CD4-positive, alpha-beta T cell (primary cell): ENCODE measurements at regions of chrX and their contacts with region 1.

Region 1: GRCh38 chrX:71181910-71182799 is 37.5 kb downstream of the NLGN3 start:
- DNase-seq: peak; percentile 55 to 94 (median 72)
- ATAC-seq: peak; percentile 94
- H3K4me3 ChIP-seq: peak overlapping the region; percentile 68
- H3K4me3 Mint-ChIP-seq: peak overlapping the region; percentile 98
- H3K27ac ChIP-seq: peak overlapping the region; percentile 89 to 92
- H3K27ac Mint-ChIP-seq: peak overlapping the region; percentile 98
- H3K4me1 ChIP-seq: peaks cover 20% of the 10 kb centered on the region
- H3K4me1 Mint-ChIP-seq: peaks cover 25% of the 10 kb centered on the region
- H3K27me3 ChIP-seq: no peaks in the 10 kb centered on the region
- H3K27me3 Mint-ChIP-seq: no peaks in the 10 kb centered on the region
- CTCF ChIP-seq: no peak

Region 2: GRCh38 chrX:70454441-70455365 is 727.5 kb before region 1 on chrX:
- CTCF ChIA-PET with region 1: no interaction called
- POLR2A ChIA-PET with region 1: no interaction called
- intact Hi-C with region 1: loop called in 1 of 2 experiments (anchors 5 kb)
- DNase-seq: peak in 13 of 14 experiments; percentile 38 to 89 (median 62)
- ATAC-seq: peak; percentile 74
- H3K4me3 ChIP-seq: peak overlapping the region; percentile 67
- H3K4me3 Mint-ChIP-seq: peak overlapping the region; percentile 87
- H3K27ac ChIP-seq: peak overlapping the region; percentile 17 to 61
- H3K27ac Mint-ChIP-seq: peak overlapping the region; percentile 86
- H3K4me1 ChIP-seq: peaks cover 40% of the 10 kb centered on the region
- H3K4me1 Mint-ChIP-seq: peaks cover 41% of the 10 kb centered on the region
- H3K27me3 ChIP-seq: no peaks in the 10 kb centered on the region
- H3K27me3 Mint-ChIP-seq: no peaks in the 10 kb centered on the region
- CTCF ChIP-seq: peak; percentile 69

Region 3: DNA sequence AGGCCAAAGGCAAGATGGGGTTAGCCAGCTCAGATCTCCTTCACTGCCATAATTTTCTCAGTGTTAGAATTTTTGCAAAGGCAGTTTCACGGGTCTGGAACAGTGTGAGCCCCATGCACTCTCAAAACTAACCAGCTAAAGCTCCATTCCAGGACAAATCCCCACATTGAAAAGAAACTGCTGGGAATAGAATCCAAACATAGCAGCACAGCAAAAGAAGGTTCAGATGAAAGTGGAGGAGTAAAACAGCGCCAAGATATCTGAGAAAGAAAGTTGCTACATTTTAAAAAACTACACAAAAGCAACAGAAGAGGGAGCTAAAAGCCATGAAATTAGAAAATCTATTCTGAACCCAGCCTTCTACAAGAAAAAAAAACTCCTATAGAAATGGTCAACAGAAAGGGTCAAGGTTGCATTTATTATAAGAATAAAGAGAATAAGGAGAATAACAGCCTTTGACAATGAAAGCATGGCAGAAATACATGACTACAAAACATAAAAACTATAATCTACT is 211.6 kb before region 1 on chrX:
- CTCF ChIA-PET with region 1: no interaction called
- POLR2A ChIA-PET with region 1: no interaction called
- intact Hi-C with region 1: loop called (anchors 1 to 5 kb)
- DNase-seq: peak in 3 of 14 experiments; percentile 16 to 26 (median 24)
- ATAC-seq: no peak
- H3K4me3 ChIP-seq: no peak overlapping the region
- H3K4me3 Mint-ChIP-seq: no peak overlapping the region
- H3K27ac ChIP-seq: no peak overlapping the region
- H3K27ac Mint-ChIP-seq: no peak overlapping the region
- H3K4me1 ChIP-seq: peaks cover 4% of the 10 kb centered on the region
- H3K4me1 Mint-ChIP-seq: peaks cover 9% of the 10 kb centered on the region
- H3K27me3 ChIP-seq: no peaks in the 10 kb centered on the region
- H3K27me3 Mint-ChIP-seq: no peaks in the 10 kb centered on the region
- CTCF ChIP-seq: peak; percentile 38

Region 4: DNA sequence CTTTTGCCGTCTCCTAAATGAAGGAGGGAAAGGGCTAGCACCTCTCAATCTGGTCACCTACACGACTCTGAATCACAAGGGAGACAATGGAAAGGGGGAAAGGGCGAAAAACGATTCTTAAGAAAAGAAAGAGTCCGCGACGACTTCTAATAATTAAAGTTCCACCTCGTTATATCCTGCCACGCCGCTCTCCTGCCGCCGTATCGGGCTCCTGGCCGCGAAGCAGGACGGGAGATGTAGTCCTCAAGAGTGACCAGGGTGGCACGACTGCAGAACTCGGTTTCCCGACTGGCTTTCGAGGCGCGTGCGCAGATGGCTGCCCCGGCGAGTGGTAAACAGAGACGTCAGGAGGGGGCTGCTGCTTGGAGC is 86.6 kb before region 1 on chrX and contains the start of gene FOXO4:
- CTCF ChIA-PET with region 1: no interaction called
- POLR2A ChIA-PET with region 1: interaction called, 6 read pairs
- intact Hi-C with region 1: loop called (anchors 2 kb)
- DNase-seq: peak; percentile 75 to 94 (median 86)
- ATAC-seq: peak; percentile 85
- H3K4me3 ChIP-seq: peak within 1 kb of the TSS; percentile 83
- H3K4me3 Mint-ChIP-seq: peak within 1 kb of the TSS; percentile 96
- H3K27ac ChIP-seq: peak within 1 kb of the TSS; percentile 41 to 62
- H3K27ac Mint-ChIP-seq: peak within 1 kb of the TSS; percentile 98
- H3K4me1 ChIP-seq: peaks cover 37% of the 10 kb centered on the region
- H3K4me1 Mint-ChIP-seq: peaks cover 49% of the 10 kb centered on the region
- H3K27me3 ChIP-seq: no peaks in the 10 kb centered on the region
- H3K27me3 Mint-ChIP-seq: no peaks in the 10 kb centered on the region
- CTCF ChIP-seq: no peak
- total RNA-seq, gene FOXO4: 20.9 to 23.8 TPM

Region 5: GRCh38 chrX:71118032-71118984 is 63.8 kb before region 1 on chrX and contains the start of gene MED12:
- CTCF ChIA-PET with region 1: no interaction called
- POLR2A ChIA-PET with region 1: interaction called, 18 read pairs
- intact Hi-C with region 1: no loop called
- DNase-seq: peak; percentile 63 to 89 (median 76)
- ATAC-seq: peak; percentile 95
- H3K4me3 ChIP-seq: peak within 1 kb of the TSS; percentile 83
- H3K4me3 Mint-ChIP-seq: peak within 1 kb of the TSS; percentile 93
- H3K27ac ChIP-seq: peak within 1 kb of the TSS; percentile 77 to 86
- H3K27ac Mint-ChIP-seq: peak within 1 kb of the TSS; percentile 94
- H3K4me1 ChIP-seq: peaks cover 40% of the 10 kb centered on the region
- H3K4me1 Mint-ChIP-seq: peaks cover 36% of the 10 kb centered on the region
- H3K27me3 ChIP-seq: no peaks in the 10 kb centered on the region
- H3K27me3 Mint-ChIP-seq: no peaks in the 10 kb centered on the region
- CTCF ChIP-seq: no peak
- total RNA-seq, gene MED12: 44.5 to 55.3 TPM

Region 6: GRCh38 chrX:71151920-71152319 is 30.2 kb before region 1 on chrX:
- CTCF ChIA-PET with region 1: no interaction called
- POLR2A ChIA-PET with region 1: no interaction called
- intact Hi-C with region 1: no loop called
- DNase-seq: no peak
- ATAC-seq: no peak
- H3K4me3 ChIP-seq: no peak overlapping the region
- H3K4me3 Mint-ChIP-seq: no peak overlapping the region
- H3K27ac ChIP-seq: no peak overlapping the region
- H3K27ac Mint-ChIP-seq: no peak overlapping the region
- H3K4me1 ChIP-seq: no peaks in the 10 kb centered on the region
- H3K4me1 Mint-ChIP-seq: no peaks in the 10 kb centered on the region
- H3K27me3 ChIP-seq: no peaks in the 10 kb centered on the region
- H3K27me3 Mint-ChIP-seq: no peaks in the 10 kb centered on the region
- CTCF ChIP-seq: no peak

Region 7: GRCh38 chrX:71198066-71198465 is 15.9 kb after region 1 on chrX:
- CTCF ChIA-PET with region 1: no interaction called
- POLR2A ChIA-PET with region 1: interaction called, 29 read pairs
- intact Hi-C with region 1: no loop called
- DNase-seq: peak in 4 of 14 experiments; percentile 18 to 59 (median 44)
- ATAC-seq: peak; percentile 49
- H3K4me3 ChIP-seq: peak overlapping the region; percentile 66
- H3K4me3 Mint-ChIP-seq: peak overlapping the region; percentile 84
- H3K27ac ChIP-seq: peak overlapping the region in 1 of 2 donors; percentile 34
- H3K27ac Mint-ChIP-seq: peak overlapping the region; percentile 77
- H3K4me1 ChIP-seq: peaks cover 12% of the 10 kb centered on the region
- H3K4me1 Mint-ChIP-seq: peaks cover 31% of the 10 kb centered on the region
- H3K27me3 ChIP-seq: no peaks in the 10 kb centered on the region
- H3K27me3 Mint-ChIP-seq: no peaks in the 10 kb centered on the region
- CTCF ChIP-seq: no peak

Region 8: DNA sequence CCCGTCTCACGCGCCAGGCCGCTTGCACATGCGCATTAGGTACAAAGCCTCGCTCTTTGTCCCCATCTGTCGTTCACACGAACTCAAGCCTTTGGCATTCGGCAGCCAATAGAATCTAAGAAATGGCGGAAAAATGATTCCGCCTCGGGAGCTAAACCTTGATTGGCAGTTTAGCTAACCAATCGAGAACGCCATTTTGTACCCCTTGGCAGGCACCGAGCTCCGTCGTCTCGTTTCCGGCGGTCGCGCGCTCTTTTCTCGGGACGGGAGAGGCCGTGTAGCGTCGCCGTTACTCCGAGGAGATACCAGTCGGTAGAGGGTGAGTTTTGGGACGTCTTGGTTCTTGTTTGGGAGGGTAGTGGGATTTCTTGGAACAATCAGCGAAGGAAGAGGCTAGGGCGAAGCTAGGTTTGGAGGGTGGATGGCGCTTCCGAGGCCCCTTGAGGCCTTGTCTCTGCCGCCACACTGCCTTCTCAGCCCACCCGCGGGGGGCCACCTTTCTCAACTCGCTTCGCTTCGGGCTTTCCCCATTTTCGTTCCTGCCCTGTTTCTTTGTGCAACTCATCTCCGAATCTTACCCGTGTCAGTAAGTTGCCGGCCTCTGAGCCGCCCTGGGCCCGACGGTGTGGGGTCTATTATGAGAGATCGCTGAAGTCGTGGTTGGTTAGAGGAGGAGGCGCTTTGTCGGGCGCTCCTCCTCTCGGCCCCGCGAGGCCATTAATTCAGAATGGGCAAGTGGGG is 101.4 kb after region 1 on chrX and contains the start of gene NONO:
- CTCF ChIA-PET with region 1: interaction called, 5 read pairs
- POLR2A ChIA-PET with region 1: interaction called, 55 read pairs
- intact Hi-C with region 1: loop called in 1 of 2 experiments (anchors 10 kb)
- DNase-seq: peak; percentile 62 to 97 (median 78)
- ATAC-seq: peak; percentile 86
- H3K4me3 ChIP-seq: peak within 1 kb of the TSS; percentile 89
- H3K4me3 Mint-ChIP-seq: peak within 1 kb of the TSS; percentile 98
- H3K27ac ChIP-seq: peak within 1 kb of the TSS; percentile 85 to 97
- H3K27ac Mint-ChIP-seq: peak within 1 kb of the TSS; percentile 99
- H3K4me1 ChIP-seq: peaks cover 28% of the 10 kb centered on the region
- H3K4me1 Mint-ChIP-seq: peaks cover 34% of the 10 kb centered on the region
- H3K27me3 ChIP-seq: no peaks in the 10 kb centered on the region
- H3K27me3 Mint-ChIP-seq: no peaks in the 10 kb centered on the region
- CTCF ChIP-seq: no peak
- total RNA-seq, gene NONO: 440 to 472 TPM